Activated CD4-positive, alpha-beta T cell treated with anti-CD3 and anti-CD28 coated beads, Interleukin-2, amount 10 ng/mL, durations not matched to agents 24 days and 14 days (primary cell): ENCODE measurements at regions of chr12 and their contacts with region 1.

Region 1: DNA sequence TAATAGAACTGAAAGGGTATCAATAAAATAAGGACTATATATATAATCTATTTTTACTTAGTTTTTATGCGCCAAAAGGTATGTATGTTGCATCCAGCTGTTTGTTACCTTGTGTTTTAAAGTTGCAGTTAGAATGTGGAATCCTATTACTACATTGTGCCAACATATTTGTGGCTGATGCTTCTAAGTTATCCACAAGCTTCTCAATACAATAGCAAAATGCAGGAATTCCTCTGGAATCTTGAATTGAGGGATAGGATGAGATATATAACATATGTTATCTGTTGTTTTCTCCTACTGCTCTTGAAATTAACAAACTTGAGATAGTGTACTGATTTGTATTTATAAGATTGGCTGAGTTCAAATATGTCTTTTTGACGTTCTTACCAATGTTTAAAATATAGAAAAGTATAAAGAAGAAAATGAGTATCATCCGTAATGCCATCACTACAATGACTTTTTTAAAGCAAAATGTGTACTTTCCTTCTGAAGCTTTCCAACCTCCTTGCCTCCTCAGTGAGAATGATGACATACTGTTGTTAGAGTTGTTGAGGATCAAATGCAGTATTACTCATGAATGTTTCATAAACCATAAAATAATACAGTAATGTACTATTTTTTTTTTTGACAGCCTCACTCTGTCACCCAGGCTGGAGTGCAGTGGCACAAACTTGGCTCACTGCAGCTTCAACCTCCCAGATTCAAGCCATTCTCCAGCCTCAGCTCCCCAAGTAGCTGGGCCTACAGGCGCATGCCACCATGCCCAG is 6.6 kb downstream of the RAP1B start:
- DNase-seq: no peak
- H3K4me3 Mint-ChIP-seq: peak overlapping the region; percentile 32
- H3K27ac Mint-ChIP-seq: peak overlapping the region; percentile 78
- H3K4me1 Mint-ChIP-seq: peaks cover 72% of the 10 kb centered on the region
- H3K27me3 Mint-ChIP-seq: no peaks in the 10 kb centered on the region

Region 2: GRCh38 chr12:68428724-68429501 is 188.4 kb before region 1 on chr12:
- intact Hi-C with region 1: no loop called
- DNase-seq: no peak
- H3K4me3 Mint-ChIP-seq: no peak overlapping the region
- H3K27ac Mint-ChIP-seq: no peak overlapping the region
- H3K4me1 Mint-ChIP-seq: no peaks in the 10 kb centered on the region
- H3K27me3 Mint-ChIP-seq: no peaks in the 10 kb centered on the region

Region 3: DNA sequence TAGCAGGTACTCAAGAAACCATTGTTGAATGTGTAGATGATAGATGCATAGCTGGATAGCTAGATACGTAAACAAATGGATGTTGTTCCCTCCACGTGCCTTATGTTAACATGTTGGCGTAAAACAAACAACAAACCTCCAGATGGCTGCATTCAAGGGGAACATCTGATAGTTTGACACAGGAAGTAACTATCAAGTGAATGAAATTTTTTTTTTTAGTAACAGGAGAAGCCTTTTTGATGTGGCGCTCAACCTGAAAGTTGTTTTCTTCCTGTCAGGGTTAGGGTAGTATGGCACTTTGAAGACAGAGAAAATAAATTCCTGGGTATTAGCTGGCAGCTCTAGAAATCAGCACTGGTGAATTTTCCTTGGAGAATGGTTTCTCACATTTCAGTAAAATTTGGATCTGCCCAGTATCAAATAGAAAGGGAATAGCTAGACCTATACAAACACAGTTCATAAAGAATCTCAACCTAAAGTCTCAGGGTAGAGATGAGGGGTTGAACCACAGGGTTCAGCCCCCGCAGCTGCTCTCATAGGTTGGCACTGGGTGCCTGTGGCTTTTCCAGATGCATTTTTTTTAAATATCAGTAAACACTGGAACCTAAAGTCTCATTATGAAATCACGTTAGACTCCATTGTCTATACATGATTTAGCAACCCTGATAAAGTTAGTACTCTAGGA is 25.5 kb before region 1 on chr12:
- intact Hi-C with region 1: no loop called
- DNase-seq: peak; percentile 84
- H3K4me3 Mint-ChIP-seq: peak overlapping the region; percentile 69
- H3K27ac Mint-ChIP-seq: peak overlapping the region; percentile 59
- H3K4me1 Mint-ChIP-seq: peaks cover 31% of the 10 kb centered on the region
- H3K27me3 Mint-ChIP-seq: no peaks in the 10 kb centered on the region

Region 4: DNA sequence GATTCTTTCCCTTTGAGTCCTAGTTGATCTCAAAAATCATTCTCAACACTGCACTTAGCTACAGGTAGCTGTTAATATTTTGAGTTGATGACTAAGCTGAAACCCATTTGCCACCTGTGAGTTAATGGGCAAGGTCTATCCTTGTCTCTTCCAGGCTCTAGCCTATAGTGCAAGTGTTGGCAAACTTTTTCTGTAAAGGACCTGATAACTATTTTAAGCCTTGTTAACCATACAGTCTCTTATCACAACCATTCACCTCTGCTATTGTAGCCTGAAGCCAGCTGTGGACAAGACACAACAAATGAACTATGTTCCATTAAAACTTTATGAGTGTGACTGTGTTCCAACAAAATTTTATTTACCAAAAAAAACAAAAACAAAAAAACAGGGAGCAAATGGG is 12.7 kb after region 1 on chr12:
- intact Hi-C with region 1: loop called (anchors 2 kb)
- DNase-seq: no peak
- H3K4me3 Mint-ChIP-seq: no peak overlapping the region
- H3K27ac Mint-ChIP-seq: no peak overlapping the region
- H3K4me1 Mint-ChIP-seq: peaks cover 52% of the 10 kb centered on the region
- H3K27me3 Mint-ChIP-seq: no peaks in the 10 kb centered on the region

Region 5: DNA sequence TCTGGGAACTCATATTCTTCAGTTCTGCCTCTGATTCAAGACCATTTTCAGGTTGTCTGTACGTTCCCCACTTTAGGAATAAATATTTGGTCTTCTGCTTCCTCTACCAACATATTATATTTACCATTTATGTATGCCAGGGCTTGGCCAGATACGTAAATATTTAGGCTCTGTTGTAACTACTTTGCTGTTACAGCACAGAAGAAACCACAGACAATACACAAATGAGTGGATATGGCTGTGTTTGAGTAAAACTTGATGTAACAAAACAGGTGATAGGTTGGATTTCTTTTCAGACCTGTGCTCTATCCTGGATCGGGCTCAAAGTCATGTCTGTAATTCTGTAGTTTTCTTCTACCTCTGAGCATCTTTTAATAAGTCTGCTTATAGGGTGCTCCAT is 30.8 kb after region 1 on chr12:
- intact Hi-C with region 1: no loop called
- DNase-seq: no peak
- H3K4me3 Mint-ChIP-seq: no peak overlapping the region
- H3K27ac Mint-ChIP-seq: peak overlapping the region; percentile 36
- H3K4me1 Mint-ChIP-seq: peaks cover 23% of the 10 kb centered on the region
- H3K27me3 Mint-ChIP-seq: no peaks in the 10 kb centered on the region